Activated B cell treated with CpG ODN at 0.5 μM for 24 hours (primary cell): ENCODE measurements at regions of chr6 and their contacts with region 1.

Region 1: GRCh38 chr6:41846666-41847237 is 48.4 kb downstream of the USP49 start:
- DNase-seq: no peak
- ATAC-seq: peak; percentile 72
- H3K4me3 Mint-ChIP-seq: no peak overlapping the region
- H3K27ac Mint-ChIP-seq: no peak overlapping the region
- H3K4me1 Mint-ChIP-seq: no peaks in the 10 kb centered on the region
- H3K27me3 Mint-ChIP-seq: no peaks in the 10 kb centered on the region
- CTCF ChIP-seq: no peak

Region 2: DNA sequence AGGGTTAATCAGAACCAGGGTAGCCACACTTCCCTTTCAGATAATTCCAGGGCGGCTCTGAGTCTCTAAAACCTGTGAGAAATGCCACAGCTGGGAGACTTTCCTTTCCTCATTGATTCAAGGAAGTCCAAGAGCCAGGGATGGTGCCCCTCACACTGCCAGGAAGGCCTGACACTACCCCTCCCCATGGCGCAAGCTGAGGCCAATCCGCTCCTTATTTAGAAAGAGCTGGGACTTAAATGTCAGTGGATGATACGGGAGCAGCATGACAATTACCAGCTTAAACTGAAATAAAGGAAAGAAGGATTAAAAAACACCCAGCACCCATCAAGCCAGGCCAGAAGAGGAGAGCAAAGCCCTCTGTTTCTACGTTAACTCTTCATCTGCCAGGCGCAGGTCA is 1504.0 kb before region 1 on chr6:
- CTCF ChIA-PET with region 1: no interaction called
- POLR2A ChIA-PET with region 1: no interaction called
- intact Hi-C with region 1: no loop called
- DNase-seq: no peak
- ATAC-seq: no peak
- H3K4me3 Mint-ChIP-seq: no peak overlapping the region
- H3K27ac Mint-ChIP-seq: no peak overlapping the region
- H3K4me1 Mint-ChIP-seq: no peaks in the 10 kb centered on the region
- H3K27me3 Mint-ChIP-seq: peaks cover 4% of the 10 kb centered on the region
- CTCF ChIP-seq: no peak

Region 3: DNA sequence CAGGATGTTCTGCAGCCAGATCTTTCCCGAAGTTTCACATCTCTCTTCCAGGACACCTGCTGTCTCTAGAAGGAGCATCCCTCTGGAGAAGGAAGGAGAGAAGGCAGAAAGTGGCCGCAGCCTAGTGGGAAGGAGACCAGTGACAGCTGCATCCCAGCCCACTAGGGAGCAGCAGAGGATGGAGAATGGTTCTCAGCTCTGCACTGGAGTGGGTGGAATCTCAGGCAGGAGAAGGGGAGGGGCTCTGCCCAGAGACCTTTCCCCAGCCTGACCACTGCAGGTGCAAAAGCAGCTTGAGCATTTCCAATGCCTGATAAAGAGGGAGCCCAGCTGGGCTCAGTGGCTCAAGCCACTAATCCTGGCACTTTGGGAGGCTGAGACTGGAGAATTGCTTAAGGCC is 479.1 kb before region 1 on chr6:
- CTCF ChIA-PET with region 1: no interaction called
- POLR2A ChIA-PET with region 1: no interaction called
- intact Hi-C with region 1: no loop called
- DNase-seq: no peak
- ATAC-seq: no peak
- H3K4me3 Mint-ChIP-seq: no peak overlapping the region
- H3K27ac Mint-ChIP-seq: no peak overlapping the region
- H3K4me1 Mint-ChIP-seq: peaks cover 19% of the 10 kb centered on the region
- H3K27me3 Mint-ChIP-seq: peaks cover 55% of the 10 kb centered on the region
- CTCF ChIP-seq: no peak

Region 4: GRCh38 chr6:41936073-41936837 is 89.5 kb after region 1 on chr6:
- CTCF ChIA-PET with region 1: interaction called, 8 read pairs
- POLR2A ChIA-PET with region 1: no interaction called
- intact Hi-C with region 1: loop called (anchors 1 kb)
- DNase-seq: peak; percentile 38
- ATAC-seq: peak; percentile 69
- H3K4me3 Mint-ChIP-seq: peak overlapping the region; percentile 53
- H3K27ac Mint-ChIP-seq: peak overlapping the region; percentile 65
- H3K4me1 Mint-ChIP-seq: peaks cover 78% of the 10 kb centered on the region
- H3K27me3 Mint-ChIP-seq: no peaks in the 10 kb centered on the region
- CTCF ChIP-seq: peak; percentile 63

Region 5: DNA sequence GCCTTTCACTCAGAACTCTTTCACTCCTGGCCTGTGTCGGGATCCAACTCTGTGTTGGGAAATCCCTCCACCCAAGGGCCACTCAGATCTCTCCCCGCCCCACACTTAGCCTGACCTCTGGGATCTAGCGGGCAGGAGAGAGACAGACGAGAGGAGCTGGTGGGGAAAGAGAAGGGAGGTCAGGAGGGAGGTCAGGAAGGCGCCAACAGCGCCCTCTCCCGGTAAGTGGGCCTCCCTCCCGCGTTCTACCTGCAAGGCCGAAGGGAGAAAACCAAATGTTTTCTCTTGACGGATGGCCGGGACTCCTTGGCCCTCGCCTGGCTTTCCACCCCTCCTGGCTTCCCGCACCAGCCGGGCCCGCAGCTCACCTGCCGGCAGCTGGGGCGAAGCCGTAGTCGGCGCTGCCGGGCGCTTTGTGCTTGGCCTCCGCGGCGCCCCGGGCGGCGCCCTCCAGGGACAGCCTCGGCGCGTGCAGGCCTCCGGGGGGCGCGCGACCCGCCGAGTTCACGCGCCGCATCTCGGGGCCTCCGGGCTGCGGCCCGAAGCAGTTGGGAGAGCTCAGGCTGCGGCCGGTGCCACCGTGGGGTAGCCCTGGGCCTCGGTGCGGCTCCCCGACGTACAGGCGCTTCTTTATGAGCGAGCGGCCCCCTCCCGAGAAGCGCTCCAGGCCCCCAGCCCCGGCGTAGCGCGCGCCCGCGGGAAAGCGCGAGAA is 257.5 kb after region 1 on chr6:
- CTCF ChIA-PET with region 1: interaction called, 6 read pairs
- POLR2A ChIA-PET with region 1: no interaction called
- intact Hi-C with region 1: loop called (anchors 1 kb)
- DNase-seq: peak; percentile 56
- ATAC-seq: peak; percentile 84
- H3K4me3 Mint-ChIP-seq: peak overlapping the region; percentile 72
- H3K27ac Mint-ChIP-seq: no peak overlapping the region
- H3K4me1 Mint-ChIP-seq: peaks cover 5% of the 10 kb centered on the region
- H3K27me3 Mint-ChIP-seq: peaks cover 8% of the 10 kb centered on the region
- CTCF ChIP-seq: no peak

Region 6: GRCh38 chr6:42745707-42746462 is 899.1 kb after region 1 on chr6 and contains the start of gene TBCC:
- CTCF ChIA-PET with region 1: no interaction called
- POLR2A ChIA-PET with region 1: no interaction called
- intact Hi-C with region 1: no loop called
- DNase-seq: peak; percentile 72
- ATAC-seq: peak; percentile 75
- H3K4me3 Mint-ChIP-seq: peak within 1 kb of the TSS; percentile 100
- H3K27ac Mint-ChIP-seq: peak within 1 kb of the TSS; percentile 100
- H3K4me1 Mint-ChIP-seq: peaks cover 32% of the 10 kb centered on the region
- H3K27me3 Mint-ChIP-seq: no peaks in the 10 kb centered on the region
- CTCF ChIP-seq: no peak
- total RNA-seq, gene TBCC: 41.5 and 41.7 TPM in 2 replicates